Activated T-helper 2 cell treated with anti-CD3 and anti-CD28 coated beads, Interferon-gamma antibody, Interleukin-2, Interleukin-4, amounts not matched to agents 10 μg/mL and 5 μg/mL and 100 μg/mL, durations not matched to agents 14 hours and 24 hours and 36 hours (primary cell): ENCODE measurements at regions of chr3 and their contacts with region 1.

Region 1: GRCh38 chr3:155854141-155854940 is at the start of gene SLC33A1:
- DNase-seq: peak; percentile 99
- H3K4me3 Mint-ChIP-seq: peak within 1 kb of the TSS; percentile 90
- H3K27ac Mint-ChIP-seq: peak within 1 kb of the TSS; percentile 99
- H3K4me1 Mint-ChIP-seq: peaks cover 25% of the 10 kb centered on the region
- H3K27me3 Mint-ChIP-seq: no peaks in the 10 kb centered on the region
- total RNA-seq, gene SLC33A1: 30.2 and 33.6 TPM in 2 replicates

Region 2: DNA sequence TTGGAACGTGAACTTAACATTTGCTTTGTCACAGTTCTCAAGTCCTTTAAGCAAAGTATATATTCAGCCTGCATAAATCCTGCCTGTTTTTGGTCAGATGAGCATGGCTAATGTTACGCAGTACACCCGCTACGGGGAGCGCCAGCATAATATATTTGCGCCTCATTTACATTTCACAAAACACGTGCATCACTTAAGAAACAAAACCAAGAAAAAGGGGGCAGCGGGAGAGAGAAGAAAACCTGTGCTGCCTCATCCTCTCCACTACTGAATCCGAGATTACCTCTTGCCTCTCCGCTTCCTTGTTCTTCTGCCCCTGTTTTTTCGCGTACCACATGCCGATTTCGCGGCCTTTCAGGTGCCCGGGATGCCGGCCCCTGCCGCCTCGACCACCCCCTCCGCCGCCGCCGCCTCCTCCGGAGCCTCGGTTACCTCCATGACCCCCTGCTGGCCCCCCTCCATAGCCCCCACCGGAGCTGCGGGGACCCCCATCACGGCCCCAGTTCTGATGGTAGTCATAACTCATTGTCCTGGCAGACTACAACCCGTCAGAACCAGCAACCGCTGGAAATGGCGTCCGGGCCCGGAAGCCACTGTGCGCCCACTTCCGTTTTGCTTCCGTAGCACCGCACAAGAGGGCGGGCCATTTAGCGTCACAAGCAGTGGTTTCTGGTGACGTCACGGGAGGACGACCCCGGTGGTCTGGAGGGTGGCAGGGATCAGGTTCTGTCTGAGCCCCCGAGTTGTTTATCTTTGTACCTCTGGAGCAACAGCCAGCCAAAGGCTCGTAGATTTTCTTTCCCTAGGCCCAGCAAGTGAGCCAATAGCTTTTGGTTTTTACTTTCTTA is 1530.2 kb before region 1 on chr3 and contains the start of gene DHX36:
- intact Hi-C with region 1: loop called (anchors 10 kb)
- DNase-seq: peak; percentile 85
- H3K4me3 Mint-ChIP-seq: peak within 1 kb of the TSS; percentile 90
- H3K27ac Mint-ChIP-seq: peak within 1 kb of the TSS; percentile 96
- H3K4me1 Mint-ChIP-seq: peaks cover 28% of the 10 kb centered on the region
- H3K27me3 Mint-ChIP-seq: peaks cover 6% of the 10 kb centered on the region
- total RNA-seq, gene DHX36: 82.1 and 88.5 TPM in 2 replicates

Region 3: GRCh38 chr3:155449613-155450267 is 404.6 kb before region 1 on chr3:
- intact Hi-C with region 1: no loop called
- DNase-seq: no peak
- H3K4me3 Mint-ChIP-seq: no peak overlapping the region
- H3K27ac Mint-ChIP-seq: no peak overlapping the region
- H3K4me1 Mint-ChIP-seq: no peaks in the 10 kb centered on the region
- H3K27me3 Mint-ChIP-seq: peaks cover 5% of the 10 kb centered on the region

Region 4: GRCh38 chr3:155805802-155806618 is 48.3 kb before region 1 on chr3 and contains the start of gene C3orf33:
- intact Hi-C with region 1: loop called (anchors 1 kb)
- DNase-seq: peak; percentile 70
- H3K4me3 Mint-ChIP-seq: peak within 1 kb of the TSS; percentile 85
- H3K27ac Mint-ChIP-seq: peak within 1 kb of the TSS; percentile 70
- H3K4me1 Mint-ChIP-seq: peaks cover 4% of the 10 kb centered on the region
- H3K27me3 Mint-ChIP-seq: peaks cover 15% of the 10 kb centered on the region
- total RNA-seq, gene C3orf33: 1.7 and 2.1 TPM in 2 replicates

Region 5: GRCh38 chr3:155870133-155870944 is 16.0 kb after region 1 on chr3 and contains the start of gene GMPS:
- intact Hi-C with region 1: loop called (anchors 1 kb)
- DNase-seq: peak; percentile 97
- H3K4me3 Mint-ChIP-seq: peak within 1 kb of the TSS; percentile 91
- H3K27ac Mint-ChIP-seq: peak within 1 kb of the TSS; percentile 95
- H3K4me1 Mint-ChIP-seq: peaks cover 16% of the 10 kb centered on the region
- H3K27me3 Mint-ChIP-seq: no peaks in the 10 kb centered on the region
- total RNA-seq, gene GMPS: 135 and 136 TPM in 2 replicates

Region 6: GRCh38 chr3:155886915-155887314 is 32.6 kb after region 1 on chr3:
- intact Hi-C with region 1: loop called (anchors 1 kb)
- DNase-seq: no peak
- H3K4me3 Mint-ChIP-seq: no peak overlapping the region
- H3K27ac Mint-ChIP-seq: peak overlapping the region; percentile 67
- H3K4me1 Mint-ChIP-seq: peaks cover 40% of the 10 kb centered on the region
- H3K27me3 Mint-ChIP-seq: no peaks in the 10 kb centered on the region

Region 7: DNA sequence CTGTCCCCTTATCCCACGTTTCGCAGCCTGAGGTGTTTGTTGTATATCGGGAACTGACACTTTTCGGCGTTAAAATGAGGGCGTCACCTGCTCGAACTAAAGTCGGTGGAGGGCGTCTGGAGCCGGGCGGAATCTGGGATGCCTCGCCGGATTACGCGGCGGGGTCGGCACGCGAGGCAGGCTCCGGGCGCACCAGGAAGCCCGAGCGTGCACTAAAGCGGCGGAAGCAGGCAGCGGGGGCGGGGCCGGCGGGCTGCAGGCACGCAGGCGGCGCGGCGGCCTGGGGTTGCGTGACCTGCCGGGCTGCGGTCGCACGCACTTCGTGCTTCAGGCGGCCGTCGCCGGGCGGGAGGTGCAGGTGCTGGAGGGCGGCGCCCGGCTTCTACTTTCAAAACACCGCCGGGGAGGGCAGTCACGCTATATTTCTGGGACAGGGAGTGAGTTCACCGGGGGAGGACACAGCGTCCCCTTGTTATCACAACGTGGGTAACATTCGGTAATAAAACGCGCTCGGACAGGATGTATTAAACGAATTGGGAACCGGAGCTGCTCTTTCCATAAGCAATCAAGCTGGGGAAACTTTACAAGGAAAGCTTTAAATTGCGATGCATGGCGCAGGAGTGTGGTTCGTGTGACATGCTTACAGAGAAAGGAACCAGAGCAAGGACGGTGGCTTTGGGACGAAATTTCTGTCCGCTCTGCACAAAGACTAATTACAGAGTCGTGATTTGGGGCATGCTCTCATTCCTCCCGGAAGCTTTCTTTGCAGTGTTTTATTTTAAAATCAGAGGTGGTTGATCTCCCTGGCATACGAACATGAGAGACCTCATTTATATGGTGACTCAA is 962.7 kb after region 1 on chr3:
- intact Hi-C with region 1: loop called (anchors 10 kb)
- DNase-seq: peak; percentile 94
- H3K4me3 Mint-ChIP-seq: peak overlapping the region; percentile 84
- H3K27ac Mint-ChIP-seq: peak overlapping the region; percentile 95
- H3K4me1 Mint-ChIP-seq: peaks cover 67% of the 10 kb centered on the region
- H3K27me3 Mint-ChIP-seq: no peaks in the 10 kb centered on the region

Region 8: GRCh38 chr3:157159762-157160657 is 1305.7 kb after region 1 on chr3 and contains the start of gene CCNL1:
- intact Hi-C with region 1: loop called (anchors 5 kb)
- DNase-seq: peak; percentile 95
- H3K4me3 Mint-ChIP-seq: peak within 1 kb of the TSS; percentile 99
- H3K27ac Mint-ChIP-seq: peak within 1 kb of the TSS; percentile 98
- H3K4me1 Mint-ChIP-seq: peaks cover 52% of the 10 kb centered on the region
- H3K27me3 Mint-ChIP-seq: no peaks in the 10 kb centered on the region
- total RNA-seq, gene CCNL1: 160 and 167 TPM in 2 replicates